Endothelial cell of umbilical vein (primary cell): ENCODE measurements at regions of chrX and their contacts with region 1.

Region 1: DNA sequence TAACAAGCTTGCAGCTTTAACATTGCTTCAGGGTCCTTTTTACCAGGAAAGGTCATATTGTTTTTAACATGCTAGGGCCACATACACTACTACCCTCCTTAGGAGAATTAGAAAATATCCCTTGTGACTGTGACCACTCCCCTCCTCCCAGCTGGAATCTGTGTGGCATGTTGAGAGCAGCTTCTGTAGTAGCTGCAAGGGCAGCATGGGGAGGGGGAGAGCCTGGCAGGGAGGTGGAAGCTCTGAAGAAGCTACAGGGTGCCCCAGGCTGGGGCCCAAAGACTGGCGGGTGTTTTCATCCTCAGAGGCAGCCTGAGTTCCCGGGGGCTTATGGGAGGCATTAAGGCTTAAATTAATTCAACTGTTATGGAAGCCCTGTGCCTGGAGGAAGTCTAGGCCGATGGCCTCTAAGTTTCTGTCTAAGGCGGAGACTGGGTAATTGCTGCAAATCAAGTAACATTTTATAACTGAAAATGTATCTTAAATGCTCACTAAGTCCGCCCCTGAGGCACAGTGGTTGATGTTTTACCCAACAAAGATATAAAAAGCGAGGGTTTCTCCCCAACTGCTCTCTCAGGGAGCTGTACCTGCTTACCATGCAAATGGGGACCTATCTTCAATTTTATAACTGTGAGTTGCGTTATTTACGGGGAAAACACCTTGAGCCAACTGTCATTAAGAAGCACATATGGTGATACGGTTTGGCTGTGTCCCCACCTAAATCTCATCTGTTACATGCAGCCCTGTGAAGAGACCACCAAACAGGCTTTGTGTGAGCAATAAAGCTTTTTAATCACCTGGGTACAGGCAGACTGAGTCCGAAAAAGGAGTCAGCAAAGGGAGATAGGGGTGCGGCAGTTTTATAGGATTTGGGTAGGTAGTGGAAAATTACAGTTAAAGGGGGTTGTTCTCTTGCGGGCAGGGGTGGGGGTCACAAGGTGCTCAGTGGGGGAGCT is 37.4 kb upstream of the STS start:
- DNase-seq: no peak
- H3K4me3 ChIP-seq: peak overlapping the region in 1 of 3 experiments; percentile 11
- H3K27ac ChIP-seq: peak overlapping the region; percentile 93
- H3K4me1 ChIP-seq: peaks cover 28% of the 10 kb centered on the region
- H3K27me3 ChIP-seq: no peaks in the 10 kb centered on the region
- CTCF ChIP-seq: no peak
- POLR2A ChIP-seq: no peak

Region 2: GRCh38 chrX:7019545-7019944 is 90.6 kb before region 1 on chrX:
- CTCF ChIA-PET with region 1: no interaction called
- POLR2A ChIA-PET with region 1: no interaction called
- dilution Hi-C with region 1: no loop called
- intact Hi-C with region 1: no loop called
- DNase-seq: no peak
- H3K4me3 ChIP-seq: no peak overlapping the region
- H3K27ac ChIP-seq: no peak overlapping the region
- H3K4me1 ChIP-seq: no peaks in the 10 kb centered on the region
- H3K27me3 ChIP-seq: no peaks in the 10 kb centered on the region
- CTCF ChIP-seq: no peak
- POLR2A ChIP-seq: no peak

Region 3: GRCh38 chrX:7119950-7120877 is 10.1 kb after region 1 on chrX:
- CTCF ChIA-PET with region 1: no interaction called
- POLR2A ChIA-PET with region 1: no interaction called
- dilution Hi-C with region 1: no loop called
- intact Hi-C with region 1: loop called (anchors 1 kb)
- DNase-seq: peak; percentile 76
- H3K4me3 ChIP-seq: no peak overlapping the region
- H3K27ac ChIP-seq: peak overlapping the region; percentile 32
- H3K4me1 ChIP-seq: peaks cover 27% of the 10 kb centered on the region
- H3K27me3 ChIP-seq: no peaks in the 10 kb centered on the region
- CTCF ChIP-seq: no peak
- POLR2A ChIP-seq: no peak

Region 4: DNA sequence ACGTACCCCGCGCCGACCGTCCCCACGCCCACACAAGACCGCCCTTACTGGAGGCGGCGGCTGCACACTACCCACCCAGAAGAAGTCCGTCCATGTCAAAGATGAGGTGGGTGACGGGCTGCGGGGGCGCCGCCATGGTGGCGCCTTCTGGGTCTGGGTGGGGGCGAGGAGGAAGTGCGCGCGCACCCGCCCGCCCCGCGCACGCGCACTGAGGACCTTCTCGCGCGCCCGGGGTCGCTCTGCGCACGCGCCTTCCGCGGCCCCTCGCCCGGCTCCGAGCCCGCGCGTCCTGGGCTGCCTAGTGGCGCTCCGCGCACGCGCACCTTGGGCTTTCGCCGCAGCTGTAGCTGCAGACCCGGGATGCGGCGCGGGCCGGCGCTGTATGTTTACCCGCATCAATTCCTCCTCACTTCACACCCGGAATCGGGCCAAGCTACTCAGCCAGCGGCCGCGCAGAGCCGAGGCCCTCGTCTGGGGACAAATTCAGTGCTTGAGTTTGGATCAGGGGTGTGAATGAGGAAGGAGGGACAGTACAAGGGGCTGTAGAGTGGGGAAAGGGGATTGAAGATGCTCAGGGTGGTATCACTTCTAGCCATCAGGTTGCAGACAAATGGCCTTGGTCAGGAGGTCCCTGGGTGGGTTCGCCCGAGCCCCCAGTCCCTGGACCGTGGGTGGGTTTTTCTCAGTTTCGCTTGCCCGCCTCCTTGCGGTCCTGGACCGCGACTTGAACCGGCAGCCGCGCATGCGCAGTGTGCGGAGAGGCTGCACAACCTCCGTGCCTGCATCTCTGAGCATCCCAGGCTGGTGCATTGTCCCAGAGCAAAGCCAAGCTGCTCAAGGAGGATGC is 38.1 kb after region 1 on chrX and contains the start of gene PUDP:
- CTCF ChIA-PET with region 1: no interaction called
- POLR2A ChIA-PET with region 1: no interaction called
- dilution Hi-C with region 1: no loop called
- intact Hi-C with region 1: loop called (anchors 1 kb)
- DNase-seq: peak; percentile 77
- H3K4me3 ChIP-seq: peak within 1 kb of the TSS; percentile 25 to 86 (median 67)
- H3K27ac ChIP-seq: peak within 1 kb of the TSS; percentile 58
- H3K4me1 ChIP-seq: no peaks in the 10 kb centered on the region
- H3K27me3 ChIP-seq: no peaks in the 10 kb centered on the region
- CTCF ChIP-seq: peak in 1 of 2 donors; percentile 39
- POLR2A ChIP-seq: peak; percentile 64
- total RNA-seq, gene PUDP: 22.5 and 24.5 TPM in 2 replicates